Caco-2 (cell line): ENCODE measurements at regions of chr7 and their contacts with region 1.

Region 1: DNA sequence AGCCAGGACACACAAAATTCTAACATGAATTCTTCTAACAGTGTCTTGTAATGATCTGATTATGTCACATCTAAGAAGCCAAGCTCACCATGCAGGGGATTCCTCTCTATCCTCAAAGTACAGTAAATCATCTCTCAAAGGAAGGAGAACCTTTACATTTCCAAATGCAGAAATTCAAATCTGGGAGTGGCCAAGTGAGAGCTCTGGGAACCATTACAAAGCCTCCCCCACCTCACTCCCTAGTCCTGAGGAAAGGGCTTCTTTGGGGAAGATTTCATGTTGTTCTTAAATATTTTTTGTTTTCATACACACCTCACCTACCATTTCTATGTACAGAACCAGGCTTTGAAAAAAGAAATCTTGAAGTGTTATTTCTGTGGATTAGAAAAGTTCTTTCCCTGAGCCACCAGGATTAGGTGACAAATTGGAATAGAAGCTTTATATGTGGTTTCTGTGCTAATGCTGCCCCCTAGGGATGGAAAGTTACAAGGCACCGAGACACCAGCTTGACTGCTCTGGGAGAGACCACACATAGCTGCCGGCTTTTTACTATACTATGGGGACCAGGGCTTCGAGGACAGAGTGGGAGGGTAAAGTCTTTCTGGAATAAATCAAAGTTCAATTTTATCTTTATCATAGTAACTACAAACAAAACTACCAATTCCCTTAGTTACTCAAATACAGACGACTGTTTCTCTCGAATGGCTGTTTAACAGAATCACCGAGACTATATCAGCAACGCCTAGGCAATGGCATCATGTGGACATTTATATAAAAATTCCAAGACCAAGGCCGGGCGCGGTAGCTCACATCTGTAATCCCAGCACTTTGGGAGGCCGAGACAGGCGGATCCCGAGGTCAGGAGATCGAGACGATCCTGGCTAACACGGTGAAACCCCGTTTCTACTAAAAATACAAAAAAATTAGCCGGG is 116.1 kb downstream of the RNF216 start:
- DNase-seq: peak; percentile 77 to 85
- H3K4me3 ChIP-seq: no peak overlapping the region
- H3K4me3 Mint-ChIP-seq: no peak overlapping the region
- H3K27ac Mint-ChIP-seq: no peak overlapping the region
- H3K4me1 ChIP-seq: no peaks in the 10 kb centered on the region
- H3K4me1 Mint-ChIP-seq: no peaks in the 10 kb centered on the region
- H3K27me3 ChIP-seq: no peaks in the 10 kb centered on the region
- H3K27me3 Mint-ChIP-seq: no peaks in the 10 kb centered on the region
- CTCF ChIP-seq: peak; percentile 84 to 85

Region 2: GRCh38 chr7:5396999-5397663 is 268.2 kb before region 1 on chr7:
- CTCF ChIA-PET with region 1: interaction called, 13 read pairs
- POLR2A ChIA-PET with region 1: no interaction called
- intact Hi-C with region 1: no loop called
- DNase-seq: no peak
- H3K4me3 ChIP-seq: no peak overlapping the region
- H3K4me3 Mint-ChIP-seq: no peak overlapping the region
- H3K27ac Mint-ChIP-seq: peak overlapping the region; percentile 79
- H3K4me1 ChIP-seq: peaks cover 7% of the 10 kb centered on the region
- H3K4me1 Mint-ChIP-seq: peaks cover 7% of the 10 kb centered on the region
- H3K27me3 ChIP-seq: no peaks in the 10 kb centered on the region
- H3K27me3 Mint-ChIP-seq: no peaks in the 10 kb centered on the region
- CTCF ChIP-seq: no peak

Region 3: GRCh38 chr7:5494683-5495561 is 170.4 kb before region 1 on chr7:
- CTCF ChIA-PET with region 1: interaction called, 19 read pairs
- POLR2A ChIA-PET with region 1: no interaction called
- intact Hi-C with region 1: loop called (anchors 1 kb)
- DNase-seq: peak; percentile 84 to 91
- H3K4me3 ChIP-seq: no peak overlapping the region
- H3K4me3 Mint-ChIP-seq: no peak overlapping the region
- H3K27ac Mint-ChIP-seq: no peak overlapping the region
- H3K4me1 ChIP-seq: peaks cover 10% of the 10 kb centered on the region
- H3K4me1 Mint-ChIP-seq: no peaks in the 10 kb centered on the region
- H3K27me3 ChIP-seq: no peaks in the 10 kb centered on the region
- H3K27me3 Mint-ChIP-seq: no peaks in the 10 kb centered on the region
- CTCF ChIP-seq: peak; percentile 96 to 97

Region 4: DNA sequence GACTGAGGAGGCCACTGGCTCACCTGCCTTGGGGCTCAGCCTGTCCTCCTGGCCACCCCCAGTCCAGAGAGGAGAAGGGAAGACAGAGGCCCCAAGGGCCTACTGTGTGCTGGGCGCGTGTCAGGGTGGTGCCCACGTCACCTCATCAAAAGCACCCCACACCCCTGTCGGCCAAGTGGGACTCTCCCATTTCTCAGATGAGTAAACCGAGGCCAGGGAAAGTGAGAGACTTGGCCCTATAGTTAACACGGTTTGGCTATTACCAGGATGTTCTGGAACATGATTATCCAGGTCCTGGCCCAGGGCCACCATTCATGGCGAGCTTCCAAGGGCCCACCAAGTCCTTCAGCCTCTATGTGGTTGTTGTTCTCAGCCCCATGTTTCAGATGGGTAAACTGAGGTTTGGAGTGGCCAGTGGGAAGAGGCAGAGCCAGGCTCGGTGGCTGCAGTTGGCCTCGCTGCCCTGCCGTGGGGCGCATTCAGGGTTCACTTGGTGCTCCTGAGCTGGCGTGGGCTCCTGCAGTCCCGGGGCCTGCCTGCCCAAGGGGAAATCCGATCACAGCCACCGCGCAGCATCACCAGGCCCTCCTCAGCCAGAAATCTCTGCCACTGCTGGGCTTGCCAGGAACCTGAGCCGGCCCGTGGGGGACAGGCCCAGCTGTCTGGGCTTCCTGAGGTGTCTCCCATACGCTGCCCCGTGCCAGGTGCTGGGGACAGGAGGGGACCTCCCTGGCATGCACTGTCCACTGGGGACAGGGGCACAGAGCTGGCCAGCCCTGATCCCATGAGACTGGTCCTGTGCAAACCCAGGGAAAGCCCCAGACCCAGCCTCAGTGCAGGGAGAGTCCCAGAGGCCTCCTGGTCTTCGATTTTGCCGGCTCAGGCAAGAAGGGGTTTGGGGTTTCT is 124.0 kb before region 1 on chr7:
- CTCF ChIA-PET with region 1: no interaction called
- POLR2A ChIA-PET with region 1: no interaction called
- intact Hi-C with region 1: no loop called
- DNase-seq: no peak
- H3K4me3 ChIP-seq: no peak overlapping the region
- H3K4me3 Mint-ChIP-seq: no peak overlapping the region
- H3K27ac Mint-ChIP-seq: no peak overlapping the region
- H3K4me1 ChIP-seq: no peaks in the 10 kb centered on the region
- H3K4me1 Mint-ChIP-seq: peaks cover 7% of the 10 kb centered on the region
- H3K27me3 ChIP-seq: no peaks in the 10 kb centered on the region
- H3K27me3 Mint-ChIP-seq: no peaks in the 10 kb centered on the region
- CTCF ChIP-seq: no peak

Region 5: DNA sequence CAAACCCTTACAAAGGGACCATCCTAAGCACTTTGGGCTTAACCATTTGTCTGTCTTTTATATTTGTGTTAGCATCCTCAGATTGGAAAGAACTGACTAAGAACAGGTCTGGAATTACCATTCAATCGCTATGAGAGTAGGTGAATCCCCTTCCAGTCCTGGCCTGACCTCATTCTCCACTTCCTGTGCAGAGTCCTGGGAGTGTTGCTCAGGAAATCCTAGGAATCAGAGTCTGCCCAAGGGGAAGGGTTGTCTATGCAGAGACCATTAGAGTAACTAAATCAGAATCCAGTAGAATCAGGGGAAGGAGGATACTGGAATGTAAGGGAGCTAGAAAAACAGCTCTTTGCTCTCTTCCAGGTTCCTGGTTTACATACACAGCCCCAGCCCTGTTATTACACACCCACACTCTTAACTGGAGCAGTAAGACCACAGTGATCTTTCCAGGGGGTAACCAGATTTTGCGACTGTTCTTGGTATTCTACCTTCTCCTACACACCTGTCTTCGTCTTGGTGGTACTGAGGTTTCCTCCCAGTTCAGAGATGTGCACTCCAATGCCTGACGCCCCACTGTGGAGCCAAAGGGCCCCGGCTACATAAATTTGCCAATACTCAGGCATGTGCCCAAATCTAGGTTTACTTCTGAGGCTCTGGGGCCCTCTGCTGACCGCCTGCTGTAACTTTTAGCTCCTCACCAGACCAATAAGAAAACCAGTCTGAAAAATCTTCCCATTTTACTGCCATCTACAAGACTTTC is 12.4 kb after region 1 on chr7:
- CTCF ChIA-PET with region 1: interaction called, 20 read pairs
- POLR2A ChIA-PET with region 1: no interaction called
- intact Hi-C with region 1: no loop called
- DNase-seq: peak; percentile 64 to 71
- H3K4me3 ChIP-seq: no peak overlapping the region
- H3K4me3 Mint-ChIP-seq: no peak overlapping the region
- H3K27ac Mint-ChIP-seq: no peak overlapping the region
- H3K4me1 ChIP-seq: no peaks in the 10 kb centered on the region
- H3K4me1 Mint-ChIP-seq: peaks cover 13% of the 10 kb centered on the region
- H3K27me3 ChIP-seq: no peaks in the 10 kb centered on the region
- H3K27me3 Mint-ChIP-seq: no peaks in the 10 kb centered on the region
- CTCF ChIP-seq: peak; percentile 65 to 75

Region 6: DNA sequence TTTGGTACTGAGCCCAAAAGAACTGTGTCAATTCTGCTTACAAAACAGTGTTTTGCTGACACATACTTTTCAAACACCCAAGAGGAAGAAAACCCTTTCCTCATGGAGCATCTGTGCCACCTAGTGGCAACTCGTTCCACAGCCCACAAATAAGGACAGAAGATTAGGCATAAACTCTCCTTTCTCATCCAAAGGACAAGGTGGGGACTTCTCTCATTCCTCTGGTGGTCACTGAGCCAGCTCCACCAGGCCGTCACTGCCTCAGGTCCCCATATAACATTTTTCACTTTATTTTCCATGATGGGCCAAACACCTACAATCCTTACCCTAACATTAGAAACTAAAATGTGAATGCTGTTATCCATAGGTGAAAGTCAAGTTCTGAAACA is 39.2 kb after region 1 on chr7:
- CTCF ChIA-PET with region 1: interaction called, 3 read pairs
- POLR2A ChIA-PET with region 1: no interaction called
- intact Hi-C with region 1: loop called (anchors 1 kb)
- DNase-seq: peak; percentile 64 to 75
- H3K4me3 ChIP-seq: no peak overlapping the region
- H3K4me3 Mint-ChIP-seq: no peak overlapping the region
- H3K27ac Mint-ChIP-seq: peak overlapping the region; percentile 17
- H3K4me1 ChIP-seq: no peaks in the 10 kb centered on the region
- H3K4me1 Mint-ChIP-seq: no peaks in the 10 kb centered on the region
- H3K27me3 ChIP-seq: no peaks in the 10 kb centered on the region
- H3K27me3 Mint-ChIP-seq: no peaks in the 10 kb centered on the region
- CTCF ChIP-seq: peak; percentile 88 to 89